Left lung (tissue), 14 donors: ENCODE measurements at regions of chr1 and their contacts with region 1.

Region 1: GRCh38 chr1:71074681-71075080 is 6.2 kb downstream of the ZRANB2 start:
- DNase-seq: no peak
- ATAC-seq: no peak
- H3K4me3 ChIP-seq: no peak overlapping the region
- H3K27ac ChIP-seq: no peak overlapping the region
- H3K4me1 ChIP-seq: peaks cover 0 to 27% of the 10 kb centered on the region in 2 donors
- H3K27me3 ChIP-seq: no peaks in the 10 kb centered on the region
- CTCF ChIP-seq: no peak

Region 2: DNA sequence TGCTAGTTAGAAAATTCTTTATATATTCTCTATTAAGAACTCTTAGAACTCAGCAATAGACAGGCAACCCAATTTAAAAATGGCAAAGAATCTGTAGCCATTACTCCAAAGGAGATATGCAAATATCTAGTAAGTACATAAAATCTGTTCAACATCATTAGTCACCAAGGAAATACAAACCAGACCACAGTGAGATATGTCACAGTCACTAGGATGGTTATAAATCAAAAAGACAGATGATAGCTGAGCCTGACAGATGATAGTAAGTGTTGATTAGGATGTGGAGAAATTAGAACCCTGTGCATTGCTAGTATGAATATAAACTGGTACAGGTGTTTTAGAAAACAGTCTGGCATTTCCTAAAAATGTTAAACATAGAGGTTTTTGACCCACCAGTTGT is 826.9 kb before region 1 on chr1:
- intact Hi-C with region 1: loop called in 1 of 2 experiments (anchors 10 kb)
- DNase-seq: no peak
- ATAC-seq: no peak
- H3K4me3 ChIP-seq: no peak overlapping the region
- H3K27ac ChIP-seq: no peak overlapping the region
- H3K4me1 ChIP-seq: no peaks in the 10 kb centered on the region
- H3K27me3 ChIP-seq: no peaks in the 10 kb centered on the region
- CTCF ChIP-seq: no peak

Region 3: DNA sequence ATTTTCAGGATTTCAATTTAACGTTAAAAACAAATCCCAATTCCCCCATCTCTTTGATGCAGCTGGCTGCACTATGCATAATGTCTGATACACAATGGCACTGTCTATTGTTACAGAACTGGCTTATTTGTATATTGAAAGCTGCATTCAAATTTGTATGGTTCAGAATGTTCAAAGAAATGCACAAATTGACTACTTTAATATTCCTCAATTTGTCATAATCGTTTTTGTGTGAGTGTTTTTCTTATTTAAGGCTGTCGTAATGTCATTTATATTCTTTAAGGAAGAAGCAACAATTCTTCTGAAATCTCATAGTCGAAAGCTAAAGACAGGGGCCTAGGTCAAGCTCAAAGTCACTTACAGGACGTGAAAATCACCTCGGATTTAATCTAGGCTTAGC is 347.5 kb after region 1 on chr1:
- intact Hi-C with region 1: no loop called
- DNase-seq: no peak
- ATAC-seq: no peak
- H3K4me3 ChIP-seq: no peak overlapping the region
- H3K27ac ChIP-seq: no peak overlapping the region
- H3K4me1 ChIP-seq: no peaks in the 10 kb centered on the region
- H3K27me3 ChIP-seq: no peaks in the 10 kb centered on the region
- CTCF ChIP-seq: no peak